Right ventricle myocardium inferior (tissue), 1 donor: ENCODE measurements at regions of chr17 and their contacts with region 1.

Region 1: GRCh38 chr17:39927929-39928857 is 661 bp downstream of the LRRC3C start:
- DNase-seq: peak; percentile 81
- ATAC-seq: peak; percentile 56

Region 2: DNA sequence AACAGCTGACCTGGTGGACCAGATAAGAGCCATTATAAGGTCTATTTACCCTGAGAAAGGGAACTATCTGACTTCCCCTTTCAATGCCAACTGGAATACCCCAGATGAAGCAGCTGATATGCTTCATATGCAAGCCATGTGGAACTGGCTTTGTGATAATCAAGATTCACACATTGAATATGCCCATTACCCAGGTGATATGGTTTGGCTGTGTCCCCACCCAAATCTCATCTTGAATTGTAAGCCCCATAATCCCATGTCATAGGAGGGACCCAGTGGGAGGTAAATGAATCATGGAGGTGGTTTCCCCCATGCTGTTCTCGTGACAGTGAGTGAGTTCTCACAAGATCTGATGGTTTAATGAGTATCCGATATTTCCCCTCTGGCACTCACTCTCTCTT is 106.1 kb before region 1 on chr17:
- intact Hi-C with region 1: no loop called
- DNase-seq: no peak
- ATAC-seq: no peak

Region 3: DNA sequence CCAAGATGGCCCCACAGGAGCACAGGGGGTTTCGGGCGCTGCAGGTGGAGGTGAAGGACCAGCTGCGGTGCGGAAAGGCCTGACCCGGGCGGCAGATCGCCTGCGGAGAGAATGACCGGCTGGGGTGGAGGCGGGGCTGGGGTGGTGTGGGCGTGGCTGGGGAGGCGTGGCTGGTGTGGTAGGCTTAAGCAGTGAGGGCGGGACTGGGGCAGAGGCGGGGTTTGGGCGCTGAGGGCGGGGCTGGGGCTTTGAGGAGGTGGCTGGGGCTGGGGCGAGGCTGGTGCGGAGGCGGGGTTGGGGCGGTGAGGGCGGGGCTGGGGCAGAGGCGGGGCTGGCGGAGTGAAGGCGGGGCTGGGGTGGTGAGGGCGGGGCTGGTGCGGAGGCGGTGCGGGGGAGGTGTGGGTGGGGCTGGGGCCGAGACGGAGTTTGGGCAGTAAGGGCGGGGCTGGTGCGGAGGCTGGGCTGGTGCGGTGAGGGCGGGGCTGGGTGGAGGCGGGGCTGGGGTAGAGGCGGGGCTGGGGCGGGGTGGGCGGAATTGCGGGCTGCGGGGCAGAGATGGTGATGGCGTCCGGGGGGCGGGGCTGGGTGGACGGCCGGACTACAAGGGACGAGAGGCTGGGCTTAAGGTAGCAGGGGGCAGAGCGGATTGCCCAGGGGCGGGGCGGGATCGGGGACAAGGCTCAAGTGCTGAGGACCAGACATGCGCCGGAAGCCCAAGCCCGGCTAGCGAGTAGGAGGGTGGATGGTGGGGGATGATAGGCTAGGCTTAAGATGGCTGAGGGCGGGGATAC is 24.7 kb after region 1 on chr17:
- intact Hi-C with region 1: loop called (anchors 1 kb)
- DNase-seq: peak; percentile 99
- ATAC-seq: peak; percentile 94

Region 4: GRCh38 chr17:39963829-39964228 is 35.6 kb after region 1 on chr17:
- intact Hi-C with region 1: no loop called
- DNase-seq: no peak
- ATAC-seq: no peak